Caco-2 (cell line): ENCODE measurements at regions of chr1 and their contacts with region 1.

Region 1: GRCh38 chr1:5514519-5515183 is 477.6 kb downstream of the NPHP4 start:
- DNase-seq: peak in 1 of 2 experiments; percentile 79
- H3K4me3 ChIP-seq: no peak overlapping the region
- H3K4me3 Mint-ChIP-seq: no peak overlapping the region
- H3K27ac Mint-ChIP-seq: no peak overlapping the region
- H3K4me1 ChIP-seq: no peaks in the 10 kb centered on the region
- H3K4me1 Mint-ChIP-seq: no peaks in the 10 kb centered on the region
- H3K27me3 ChIP-seq: no peaks in the 10 kb centered on the region; the same call in 1 of the 2 replicates
- H3K27me3 Mint-ChIP-seq: peaks cover 5% of the 10 kb centered on the region
- CTCF ChIP-seq: peak; percentile 89 to 96

Region 2: GRCh38 chr1:5493851-5494311 is 20.8 kb before region 1 on chr1:
- CTCF ChIA-PET with region 1: no interaction called
- POLR2A ChIA-PET with region 1: no interaction called
- intact Hi-C with region 1: no loop called
- DNase-seq: no peak
- H3K4me3 ChIP-seq: no peak overlapping the region
- H3K4me3 Mint-ChIP-seq: no peak overlapping the region
- H3K27ac Mint-ChIP-seq: no peak overlapping the region
- H3K4me1 ChIP-seq: no peaks in the 10 kb centered on the region
- H3K4me1 Mint-ChIP-seq: no peaks in the 10 kb centered on the region
- H3K27me3 ChIP-seq: no peaks in the 10 kb centered on the region
- H3K27me3 Mint-ChIP-seq: peaks cover 6% of the 10 kb centered on the region
- CTCF ChIP-seq: no peak

Region 3: GRCh38 chr1:5751833-5752745 is 237.4 kb after region 1 on chr1:
- CTCF ChIA-PET with region 1: interaction called, 20 read pairs
- POLR2A ChIA-PET with region 1: no interaction called
- intact Hi-C with region 1: loop called (anchors 2 kb)
- DNase-seq: peak in 1 of 2 experiments; percentile 35
- H3K4me3 ChIP-seq: no peak overlapping the region
- H3K4me3 Mint-ChIP-seq: no peak overlapping the region
- H3K27ac Mint-ChIP-seq: no peak overlapping the region
- H3K4me1 ChIP-seq: no peaks in the 10 kb centered on the region
- H3K4me1 Mint-ChIP-seq: peaks cover 12% of the 10 kb centered on the region
- H3K27me3 ChIP-seq: no peaks in the 10 kb centered on the region
- H3K27me3 Mint-ChIP-seq: peaks cover 3% of the 10 kb centered on the region
- CTCF ChIP-seq: peak in 1 of 2 experiments; percentile 23